ENCODE measurements at regions of chr10 and their contacts with region 1.

Region 1: DNA sequence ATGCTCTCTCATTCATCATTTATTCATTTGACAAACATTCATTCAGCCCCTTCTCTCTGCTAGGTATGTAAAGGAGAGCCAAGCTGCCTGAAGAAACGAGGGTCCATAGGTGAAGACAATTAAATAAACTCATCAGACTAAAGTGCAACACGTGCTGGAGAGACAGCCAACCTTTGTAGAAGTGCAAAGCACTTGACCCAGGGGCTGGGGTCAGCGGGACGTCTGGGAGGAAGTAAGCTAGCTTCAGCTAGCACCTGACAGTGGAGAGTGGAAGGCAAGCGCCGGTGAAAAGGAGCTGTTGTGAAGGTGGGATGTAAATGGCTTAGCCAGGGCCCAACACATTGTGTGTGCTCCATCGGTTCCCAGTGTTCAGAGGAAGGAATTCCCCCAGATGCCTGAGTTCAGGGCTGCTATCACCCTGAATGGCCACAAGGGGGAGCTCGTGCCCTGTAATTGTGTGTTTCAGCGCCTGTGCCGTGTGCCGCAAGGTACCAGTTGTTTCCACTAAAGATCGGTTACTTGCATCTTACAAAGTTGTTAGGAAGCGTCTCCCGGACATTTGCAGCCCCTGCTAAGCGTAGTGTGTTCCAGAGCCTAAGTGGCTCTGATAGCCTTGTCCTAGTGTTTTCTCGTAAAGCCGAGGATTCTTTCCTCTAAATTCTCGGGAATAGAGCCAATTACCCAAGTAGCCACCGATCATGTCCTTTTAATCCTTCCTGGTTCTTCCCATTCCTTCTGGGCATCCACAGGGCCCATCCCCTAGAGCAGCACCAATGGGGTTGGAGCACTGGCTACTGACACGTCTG is 30.6 kb downstream of the TLX1 start:
- DNase-seq: peak; percentile 12
- ATAC-seq: peak; percentile 96
- H3K4me3 ChIP-seq: no peak overlapping the region
- H3K27ac ChIP-seq: no peak overlapping the region
- H3K4me1 ChIP-seq: peaks cover 6% of the 10 kb centered on the region
- H3K27me3 ChIP-seq: peaks cover 1 to 2% of the 10 kb centered on the region in 2 experiments; a peak in 3 of 4 replicates
- CTCF ChIP-seq: peak; percentile 94 to 97 (median 95); a peak in 5 of 6 replicates
- EP300 ChIP-seq: no peak
- POLR2A ChIP-seq: no peak
- RAD21 ChIP-seq: peak; percentile 70

Region 2: DNA sequence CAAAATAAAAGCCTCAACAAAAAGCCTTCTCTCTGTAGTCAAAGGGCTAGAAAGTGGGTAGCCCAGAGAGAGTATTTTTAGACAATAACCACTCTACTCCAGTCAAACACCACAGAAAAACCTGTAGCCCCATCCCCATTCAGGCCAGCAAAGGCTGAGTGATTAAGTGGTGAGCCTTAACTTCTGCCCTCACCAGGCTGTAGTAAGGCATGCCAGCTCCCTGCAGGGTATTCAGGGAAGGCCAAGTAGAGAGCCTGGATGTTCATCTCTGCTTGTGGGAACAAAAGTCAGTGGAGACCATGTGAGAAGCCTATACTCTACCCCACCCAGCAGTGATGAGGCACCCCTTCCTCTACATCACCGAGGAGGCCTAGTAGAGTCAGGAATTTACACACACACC is 574.7 kb before region 1 on chr10:
- CTCF ChIA-PET with region 1: no interaction called
- POLR2A ChIA-PET with region 1: no interaction called
- RAD21 ChIA-PET with region 1: no interaction called
- SMC1A ChIA-PET with region 1: no interaction called
- in situ Hi-C with region 1: no loop called
- intact Hi-C with region 1: no loop called
- DNase-seq: no peak
- ATAC-seq: no peak
- H3K4me3 ChIP-seq: no peak overlapping the region
- H3K27ac ChIP-seq: no peak overlapping the region
- H3K4me1 ChIP-seq: no peaks in the 10 kb centered on the region
- H3K27me3 ChIP-seq: no peaks in the 10 kb centered on the region
- CTCF ChIP-seq: no peak
- EP300 ChIP-seq: no peak
- POLR2A ChIP-seq: no peak
- RAD21 ChIP-seq: no peak

Region 3: DNA sequence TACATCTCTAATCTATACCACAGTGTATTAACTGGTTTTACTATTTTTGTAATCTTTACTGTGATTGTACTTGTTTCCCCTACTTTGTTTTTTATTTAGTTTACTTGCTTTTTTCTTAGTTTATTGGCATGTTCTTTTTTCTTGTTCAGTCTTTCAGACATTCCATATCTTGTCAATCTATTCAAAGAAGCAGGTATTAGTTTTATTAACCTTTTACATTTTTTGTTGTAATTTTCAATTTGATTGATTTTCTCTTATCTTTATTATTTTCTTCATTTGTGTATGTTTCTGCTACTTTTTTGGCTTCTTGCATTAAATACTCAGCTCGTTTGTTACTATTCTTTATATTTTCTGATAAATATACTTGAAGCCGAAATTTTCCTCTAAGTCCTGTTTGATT is 11.0 kb after region 1 on chr10:
- CTCF ChIA-PET with region 1: interaction called, 13 read pairs
- POLR2A ChIA-PET with region 1: no interaction called
- RAD21 ChIA-PET with region 1: no interaction called
- SMC1A ChIA-PET with region 1: no interaction called
- in situ Hi-C with region 1: no loop called
- intact Hi-C with region 1: no loop called
- DNase-seq: no peak
- ATAC-seq: no peak
- H3K4me3 ChIP-seq: no peak overlapping the region
- H3K27ac ChIP-seq: no peak overlapping the region
- H3K4me1 ChIP-seq: no peaks in the 10 kb centered on the region
- H3K27me3 ChIP-seq: no peaks in the 10 kb centered on the region
- CTCF ChIP-seq: no peak
- EP300 ChIP-seq: no peak
- POLR2A ChIP-seq: no peak
- RAD21 ChIP-seq: no peak

Region 4: DNA sequence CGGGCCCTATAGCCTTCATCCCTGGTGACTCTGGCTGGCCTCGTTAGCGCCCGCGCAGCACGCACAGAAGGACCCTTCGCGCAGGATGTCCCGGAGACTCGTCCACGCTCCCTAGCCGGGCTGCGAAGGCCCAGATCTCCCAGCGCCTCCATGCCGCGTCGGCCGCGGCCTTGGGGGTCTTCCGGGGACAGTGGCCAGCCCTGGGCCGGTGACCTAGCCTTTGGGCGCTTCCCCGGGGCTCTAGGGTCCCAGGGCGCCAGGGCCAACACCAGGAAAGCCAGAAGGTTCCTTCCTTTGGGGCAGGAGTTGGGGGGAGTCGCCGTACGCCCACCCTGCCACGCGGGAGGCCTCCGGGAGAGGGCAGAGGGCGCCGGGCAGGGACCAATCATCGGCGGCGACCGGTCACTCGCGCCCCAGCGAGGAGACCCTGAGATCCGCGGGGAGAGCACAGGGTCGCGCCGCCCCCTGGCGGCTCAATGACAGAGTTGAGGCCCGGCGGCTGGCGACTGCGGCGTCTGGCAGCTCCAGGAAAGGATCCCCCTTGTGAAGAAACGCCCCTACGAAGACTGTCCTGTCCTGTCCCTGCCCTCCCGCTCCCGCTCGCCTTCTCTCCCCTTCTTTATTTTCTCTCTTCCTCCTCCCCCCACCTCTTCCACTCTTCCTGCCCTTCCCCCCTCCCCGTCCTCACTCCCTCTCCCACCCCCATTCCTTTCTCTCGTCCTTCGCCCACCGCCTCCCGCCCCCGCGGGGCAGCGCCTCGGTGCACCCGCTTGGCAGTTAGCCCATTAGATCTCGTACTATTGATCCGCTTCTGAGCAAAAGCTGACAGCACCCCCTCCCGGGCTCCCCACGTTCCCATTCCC is 129.9 kb after region 1 on chr10:
- CTCF ChIA-PET with region 1: interaction called, 5 read pairs
- POLR2A ChIA-PET with region 1: no interaction called
- RAD21 ChIA-PET with region 1: no interaction called
- SMC1A ChIA-PET with region 1: no interaction called
- in situ Hi-C with region 1: no loop called
- intact Hi-C with region 1: loop called (anchors 5 kb)
- DNase-seq: no peak
- ATAC-seq: peak; percentile 90
- H3K4me3 ChIP-seq: peak overlapping the region; percentile 46; the same call in 1 of the 2 replicates
- H3K27ac ChIP-seq: no peak overlapping the region
- H3K4me1 ChIP-seq: no peaks in the 10 kb centered on the region
- H3K27me3 ChIP-seq: peaks cover 10 to 19% of the 10 kb centered on the region in 2 experiments
- CTCF ChIP-seq: peak; percentile 50 to 65 (median 51)
- EP300 ChIP-seq: no peak
- POLR2A ChIP-seq: no peak
- RAD21 ChIP-seq: peak; percentile 42